ENCODE measurements at regions of chr16 and their contacts with region 1.

Region 1: GRCh38 chr16:54193665-54194333 is 92.8 kb downstream of the IRX3 start:
- DNase-seq: peak; percentile 80 to 96
- H3K4me3 ChIP-seq: no peak overlapping the region
- CTCF ChIP-seq: peak in 1 of 3 donors; percentile 69
- POLR2A ChIP-seq: no peak

Region 2: GRCh38 chr16:54286090-54286993 is 92.5 kb after region 1 on chr16 and contains the start of gene IRX3:
- intact Hi-C with region 1: loop called (anchors 5 kb)
- DNase-seq: peak; percentile 90 to 97
- H3K4me3 ChIP-seq: peak within 1 kb of the TSS; percentile 75
- CTCF ChIP-seq: peak in 1 of 3 donors; percentile 36
- POLR2A ChIP-seq: no peak
- total RNA-seq, gene IRX3: 79.7 to 181 (median 150) TPM